MCF 10A (cell line): ENCODE measurements at regions of chr1 and their contacts with region 1.

Region 1: GRCh38 chr1:150561974-150562445 is 12.8 kb downstream of the ADAMTSL4 start:
- DNase-seq: peak; percentile 98
- H3K4me3 Mint-ChIP-seq: peak overlapping the region; percentile 74
- H3K27ac Mint-ChIP-seq: peak overlapping the region; percentile 99
- H3K4me1 Mint-ChIP-seq: peaks cover 52% of the 10 kb centered on the region
- H3K27me3 Mint-ChIP-seq: no peaks in the 10 kb centered on the region
- CTCF ChIP-seq: no peak

Region 2: GRCh38 chr1:150420560-150421265 is 141.3 kb before region 1 on chr1:
- CTCF ChIA-PET with region 1: no interaction called
- POLR2A ChIA-PET with region 1: no interaction called
- intact Hi-C with region 1: no loop called
- DNase-seq: peak; percentile 17
- H3K4me3 Mint-ChIP-seq: no peak overlapping the region
- H3K27ac Mint-ChIP-seq: no peak overlapping the region
- H3K4me1 Mint-ChIP-seq: peaks cover 17% of the 10 kb centered on the region
- H3K27me3 Mint-ChIP-seq: no peaks in the 10 kb centered on the region
- CTCF ChIP-seq: no peak

Region 3: DNA sequence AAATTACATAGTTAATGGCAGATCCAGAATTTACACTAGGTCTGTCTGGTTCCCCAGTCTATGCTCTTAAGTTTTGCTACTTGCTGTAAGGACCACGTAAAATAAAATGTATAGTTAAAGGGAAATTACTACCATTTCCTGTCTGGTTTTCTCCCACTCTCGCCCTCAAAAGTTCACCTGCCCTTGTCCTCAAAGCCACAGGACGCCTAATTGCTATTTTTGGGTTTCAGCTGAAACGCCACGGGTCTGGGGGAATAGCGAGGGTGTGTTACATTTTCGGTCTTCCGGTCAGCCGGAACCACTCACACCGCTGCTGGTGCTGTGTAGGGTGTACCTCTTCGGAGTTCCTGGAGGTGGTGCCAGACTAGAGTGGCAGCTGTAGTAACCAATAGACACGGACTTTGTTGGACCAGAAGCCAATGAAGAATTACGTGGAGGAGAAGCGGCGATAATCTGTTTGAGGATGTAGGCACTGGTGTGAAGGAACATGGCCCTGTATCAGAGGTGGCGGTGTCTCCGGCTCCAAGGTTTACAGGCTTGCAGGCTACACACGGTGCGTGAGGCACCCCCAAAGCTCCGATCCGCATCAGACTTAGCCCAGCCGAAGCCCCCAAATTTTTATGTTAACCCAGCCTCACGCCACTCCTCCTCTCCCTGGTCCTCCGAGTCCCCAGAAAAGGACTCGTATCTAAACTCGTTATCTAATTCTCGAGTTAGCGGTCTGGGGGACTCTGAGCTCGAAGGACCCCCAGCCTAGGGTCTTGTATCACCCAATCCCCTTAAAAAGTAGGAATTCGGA is 74.8 kb before region 1 on chr1 and contains the start of gene TARS2:
- CTCF ChIA-PET with region 1: interaction called, 5 read pairs
- POLR2A ChIA-PET with region 1: interaction called, 17 read pairs
- intact Hi-C with region 1: loop called (anchors 1 kb)
- DNase-seq: peak; percentile 100
- H3K4me3 Mint-ChIP-seq: peak within 1 kb of the TSS; percentile 99
- H3K27ac Mint-ChIP-seq: peak within 1 kb of the TSS; percentile 93
- H3K4me1 Mint-ChIP-seq: peaks cover 14% of the 10 kb centered on the region
- H3K27me3 Mint-ChIP-seq: no peaks in the 10 kb centered on the region
- CTCF ChIP-seq: no peak
- total RNA-seq, gene TARS2: 43.1 and 65.3 TPM in 2 replicates

Region 4: GRCh38 chr1:150578965-150579798 is 17.2 kb after region 1 on chr1 and contains the start of gene MCL1:
- CTCF ChIA-PET with region 1: interaction called, 245 read pairs
- POLR2A ChIA-PET with region 1: interaction called, 1,801 read pairs
- intact Hi-C with region 1: loop called (anchors 1 kb)
- DNase-seq: peak; percentile 98
- H3K4me3 Mint-ChIP-seq: peak within 1 kb of the TSS; percentile 99
- H3K27ac Mint-ChIP-seq: peak within 1 kb of the TSS; percentile 99
- H3K4me1 Mint-ChIP-seq: peaks cover 35% of the 10 kb centered on the region
- H3K27me3 Mint-ChIP-seq: no peaks in the 10 kb centered on the region
- CTCF ChIP-seq: no peak
- total RNA-seq, gene MCL1: 497 and 624 TPM in 2 replicates

Region 5: GRCh38 chr1:150650199-150650598 is 88.2 kb after region 1 on chr1:
- CTCF ChIA-PET with region 1: interaction called, 12 read pairs
- POLR2A ChIA-PET with region 1: no interaction called
- intact Hi-C with region 1: no loop called
- DNase-seq: no peak
- H3K4me3 Mint-ChIP-seq: no peak overlapping the region
- H3K27ac Mint-ChIP-seq: no peak overlapping the region
- H3K4me1 Mint-ChIP-seq: no peaks in the 10 kb centered on the region
- H3K27me3 Mint-ChIP-seq: no peaks in the 10 kb centered on the region
- CTCF ChIP-seq: no peak

Region 6: GRCh38 chr1:150813058-150813707 is 251.2 kb after region 1 on chr1:
- CTCF ChIA-PET with region 1: interaction called, 32 read pairs
- POLR2A ChIA-PET with region 1: interaction called, 25 read pairs
- intact Hi-C with region 1: loop called (anchors 1 kb)
- DNase-seq: peak; percentile 74
- H3K4me3 Mint-ChIP-seq: no peak overlapping the region
- H3K27ac Mint-ChIP-seq: no peak overlapping the region
- H3K4me1 Mint-ChIP-seq: no peaks in the 10 kb centered on the region
- H3K27me3 Mint-ChIP-seq: no peaks in the 10 kb centered on the region
- CTCF ChIP-seq: peak; percentile 94

Region 7: GRCh38 chr1:150979092-150980056 is 417.4 kb after region 1 on chr1:
- CTCF ChIA-PET with region 1: interaction called, 7 read pairs
- POLR2A ChIA-PET with region 1: interaction called, 3 read pairs
- intact Hi-C with region 1: loop called (anchors 2 kb)
- DNase-seq: peak; percentile 95
- H3K4me3 Mint-ChIP-seq: no peak overlapping the region
- H3K27ac Mint-ChIP-seq: no peak overlapping the region
- H3K4me1 Mint-ChIP-seq: peaks cover 32% of the 10 kb centered on the region
- H3K27me3 Mint-ChIP-seq: no peaks in the 10 kb centered on the region
- CTCF ChIP-seq: peak; percentile 100

Region 8: GRCh38 chr1:151476083-151476482 is 914.1 kb after region 1 on chr1:
- CTCF ChIA-PET with region 1: no interaction called
- POLR2A ChIA-PET with region 1: no interaction called
- intact Hi-C with region 1: no loop called
- DNase-seq: no peak
- H3K4me3 Mint-ChIP-seq: no peak overlapping the region
- H3K27ac Mint-ChIP-seq: no peak overlapping the region
- H3K4me1 Mint-ChIP-seq: no peaks in the 10 kb centered on the region
- H3K27me3 Mint-ChIP-seq: no peaks in the 10 kb centered on the region
- CTCF ChIP-seq: no peak